Heart left ventricle (tissue), 16 donors: ENCODE measurements at regions of chr22 and their contacts with region 1.

Region 1: DNA sequence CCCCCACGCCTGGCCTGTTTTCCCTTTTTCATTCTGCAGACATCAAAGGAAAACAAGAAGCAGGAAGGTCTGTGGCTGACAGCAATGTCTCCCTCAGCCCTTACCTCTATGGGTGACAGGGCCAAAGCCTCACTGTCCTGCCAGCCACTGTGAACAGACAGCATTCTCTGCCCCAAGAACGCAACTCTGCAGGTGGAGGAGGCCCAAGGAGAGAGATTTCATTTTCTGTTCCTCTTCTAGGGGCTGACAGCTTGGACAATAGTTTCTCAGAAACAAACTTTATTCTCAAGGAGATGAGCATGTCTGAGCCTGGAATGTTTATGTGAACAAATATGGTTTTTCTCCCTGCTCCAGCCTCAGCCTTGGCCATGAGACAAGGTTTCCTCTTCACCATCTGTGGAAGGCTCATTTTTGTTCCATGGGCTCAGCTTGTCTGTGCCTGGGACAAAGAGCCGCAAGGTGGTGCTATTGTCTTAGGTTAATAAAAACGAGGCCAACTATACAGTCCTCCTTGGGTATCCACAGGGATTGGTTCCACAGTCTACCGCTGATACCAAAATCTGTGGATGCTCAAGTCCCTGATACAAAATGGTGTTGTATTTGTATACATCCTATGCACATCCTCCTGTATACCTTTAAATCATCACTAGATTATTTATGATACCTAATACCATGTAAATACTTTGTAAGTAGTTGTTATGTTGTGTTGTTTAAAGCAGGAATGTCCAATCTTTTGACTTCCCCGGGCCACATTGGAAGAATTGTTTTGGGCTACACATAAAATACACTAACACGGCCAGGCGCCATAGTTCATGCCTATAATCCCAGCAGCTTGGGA is 5.8 kb downstream of the PIWIL3 start:
- DNase-seq: peak in 4 of 5 donors; percentile 31 to 48 (median 42)
- ATAC-seq: peak; percentile 67 to 94 (median 85)
- H3K4me3 ChIP-seq: no peak overlapping the region
- H3K27ac ChIP-seq: no peak overlapping the region
- H3K4me1 ChIP-seq: no peaks in the 10 kb centered on the region
- H3K27me3 ChIP-seq: peaks cover 0 to 30% (median 8%) of the 10 kb centered on the region in 9 donors
- CTCF ChIP-seq: peak; percentile 35 to 77 (median 64)
- POLR2A ChIP-seq: no peak

Region 2: GRCh38 chr22:24379536-24379935 is 389.2 kb before region 1 on chr22:
- intact Hi-C with region 1: no loop called
- DNase-seq: no peak
- ATAC-seq: no peak
- H3K4me3 ChIP-seq: no peak overlapping the region
- H3K27ac ChIP-seq: peak overlapping the region in 2 of 12 donors; percentile 12 to 35
- H3K4me1 ChIP-seq: peaks cover 0 to 20% (median 5%) of the 10 kb centered on the region in 12 donors
- H3K27me3 ChIP-seq: no peaks in the 10 kb centered on the region
- CTCF ChIP-seq: no peak
- POLR2A ChIP-seq: no peak

Region 3: DNA sequence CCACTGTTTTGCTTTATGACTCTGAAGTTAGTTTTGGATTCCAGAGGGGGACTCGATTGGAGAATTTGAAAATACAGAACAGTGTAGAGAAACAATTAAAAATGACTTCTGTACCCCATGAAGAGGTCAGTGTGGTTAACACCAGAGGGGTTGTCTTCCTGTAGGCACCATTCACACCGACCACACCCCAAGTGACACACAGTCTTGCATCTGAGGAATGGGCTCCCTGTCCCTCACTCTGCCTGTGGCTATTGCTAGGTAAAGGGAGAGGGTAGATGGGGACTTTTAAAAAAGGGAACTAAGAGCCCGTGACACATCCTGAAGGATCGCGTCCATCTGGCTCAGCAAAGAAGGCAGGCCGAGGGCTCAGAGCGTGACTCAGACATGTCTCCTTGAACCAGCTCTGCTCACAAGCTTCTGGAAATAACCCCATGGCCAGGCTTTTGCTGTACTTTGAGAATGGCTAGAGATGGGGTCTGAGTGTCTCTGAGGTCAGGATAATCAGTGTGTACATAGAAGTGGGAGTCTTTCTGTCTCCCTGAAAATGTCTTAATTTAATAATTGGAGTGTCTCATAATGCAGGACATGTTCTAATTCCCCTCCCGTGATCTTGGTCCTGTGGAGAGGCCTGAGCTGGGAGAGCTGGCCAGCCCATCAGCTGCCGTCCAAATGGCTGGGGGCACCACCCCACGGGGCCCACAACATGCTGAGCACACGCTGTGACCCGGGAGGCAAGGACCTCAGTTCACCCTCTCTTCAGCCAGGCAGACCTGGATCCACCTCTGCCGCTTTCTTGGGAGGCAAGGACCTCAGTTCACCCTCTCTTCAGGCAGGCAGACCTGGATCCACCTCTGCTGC is 76.5 kb after region 1 on chr22:
- intact Hi-C with region 1: loop called in 9 of 10 experiments (anchors 2 to 5 kb)
- DNase-seq: peak in 1 of 5 donors; percentile 50
- ATAC-seq: peak in 3 of 4 donors; percentile 30 to 74 (median 71)
- H3K4me3 ChIP-seq: no peak overlapping the region
- H3K27ac ChIP-seq: no peak overlapping the region
- H3K4me1 ChIP-seq: peaks cover 0 to 7% (median 0%) of the 10 kb centered on the region in 12 donors
- H3K27me3 ChIP-seq: no peaks in the 10 kb centered on the region
- CTCF ChIP-seq: no peak
- POLR2A ChIP-seq: no peak

Region 4: GRCh38 chr22:25048659-25049647 is 280.2 kb after region 1 on chr22:
- intact Hi-C with region 1: loop called in 5 of 10 experiments (anchors 5 to 10 kb)
- DNase-seq: peak in 4 of 5 donors; percentile 57 to 77 (median 66)
- ATAC-seq: peak; percentile 46 to 84 (median 79)
- H3K4me3 ChIP-seq: no peak overlapping the region
- H3K27ac ChIP-seq: no peak overlapping the region
- H3K4me1 ChIP-seq: peaks cover 0 to 33% (median 3%) of the 10 kb centered on the region in 12 donors
- H3K27me3 ChIP-seq: no peaks in the 10 kb centered on the region
- CTCF ChIP-seq: peak; percentile 75 to 96 (median 90)
- POLR2A ChIP-seq: no peak

Region 5: GRCh38 chr22:25057013-25057881 is 288.5 kb after region 1 on chr22:
- intact Hi-C with region 1: loop called in 5 of 10 experiments (anchors 5 to 10 kb)
- DNase-seq: peak in 4 of 5 donors; percentile 46 to 86 (median 58)
- ATAC-seq: peak; percentile 19 to 79 (median 76)
- H3K4me3 ChIP-seq: no peak overlapping the region
- H3K27ac ChIP-seq: no peak overlapping the region
- H3K4me1 ChIP-seq: peaks cover 0 to 18% (median 1%) of the 10 kb centered on the region in 12 donors
- H3K27me3 ChIP-seq: no peaks in the 10 kb centered on the region
- CTCF ChIP-seq: peak; percentile 74 to 95 (median 84)
- POLR2A ChIP-seq: no peak